ENCODE measurements at regions of chr16 and their contacts with region 1.

Region 1: DNA sequence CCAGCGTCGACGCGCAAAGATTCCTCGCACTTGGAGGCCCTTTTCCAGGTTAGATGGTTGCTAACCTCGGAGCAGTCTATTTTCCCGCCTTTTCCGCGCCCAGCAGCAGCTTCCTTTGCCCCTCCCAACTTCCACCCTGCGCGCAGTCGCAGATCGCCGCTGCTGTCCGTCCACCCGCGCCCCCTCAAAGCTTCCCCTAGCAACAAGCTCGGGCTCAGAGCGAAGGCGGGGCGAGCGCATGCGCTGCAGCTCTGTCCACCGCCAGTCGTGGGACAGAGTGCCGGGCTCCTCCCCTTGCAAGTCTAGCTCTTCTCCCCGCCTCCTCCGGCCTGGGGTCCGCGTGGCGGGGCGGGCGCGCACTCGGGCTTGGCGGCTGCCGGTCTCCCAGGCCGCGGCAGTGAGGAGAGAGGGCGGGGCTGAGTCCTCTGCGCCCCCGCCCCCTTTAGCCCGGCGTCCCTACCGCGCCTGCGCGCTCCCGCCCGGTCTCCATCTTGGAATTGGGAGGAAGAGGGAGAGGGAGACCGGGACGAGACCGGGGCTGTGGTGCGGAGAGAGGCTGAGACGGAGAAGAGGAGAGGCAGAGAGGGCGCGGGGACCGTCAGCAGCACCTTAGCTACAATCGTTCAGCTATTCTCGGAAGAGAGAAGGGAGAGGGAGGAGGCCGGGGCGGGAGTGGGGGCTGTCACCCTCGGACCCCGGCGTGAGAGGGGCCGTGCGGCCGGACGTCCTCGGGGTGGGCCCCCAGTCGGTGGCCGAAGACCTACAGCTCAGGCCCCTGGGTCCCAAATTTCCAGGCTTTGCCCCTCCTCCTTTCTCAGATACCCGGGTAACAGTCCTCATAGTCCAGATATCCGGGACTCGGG is at the start of gene TAOK2:
- DNase-seq: peak; percentile 99
- ATAC-seq: peak; percentile 99
- total RNA-seq, gene TAOK2: 32.7 TPM

Region 2: DNA sequence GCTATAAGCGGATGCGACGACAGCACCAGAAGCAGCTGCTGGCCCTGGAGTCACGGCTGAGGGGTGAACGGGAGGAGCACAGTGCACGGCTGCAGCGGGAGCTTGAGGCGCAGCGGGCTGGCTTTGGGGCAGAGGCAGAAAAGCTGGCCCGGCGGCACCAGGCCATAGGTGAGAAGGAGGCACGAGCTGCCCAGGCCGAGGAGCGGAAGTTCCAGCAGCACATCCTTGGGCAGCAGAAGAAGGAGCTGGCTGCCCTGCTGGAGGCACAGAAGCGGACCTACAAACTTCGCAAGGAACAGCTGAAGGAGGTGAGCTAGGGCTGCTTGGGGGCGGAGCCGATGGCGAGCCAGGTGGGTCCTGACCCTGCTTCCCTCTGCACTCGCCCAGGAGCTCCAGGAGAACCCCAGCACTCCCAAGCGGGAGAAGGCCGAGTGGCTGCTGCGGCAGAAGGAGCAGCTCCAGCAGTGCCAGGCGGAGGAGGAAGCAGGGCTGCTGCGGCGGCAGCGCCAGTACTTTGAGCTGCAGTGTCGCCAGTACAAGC is 11.7 kb after region 1 on chr16:
- intact Hi-C with region 1: loop called (anchors 1 kb)
- DNase-seq: peak; percentile 32
- ATAC-seq: no peak